AG04450 (cell line): ENCODE measurements at regions of chr22 and their contacts with region 1.

Region 1: GRCh38 chr22:31602259-31602952 is 59.6 kb downstream of the PISD start:
- DNase-seq: peak; percentile 78
- H3K4me3 ChIP-seq: no peak overlapping the region
- H3K27ac ChIP-seq: peak overlapping the region; percentile 72
- H3K27me3 ChIP-seq: no peaks in the 10 kb centered on the region
- CTCF ChIP-seq: no peak

Region 2: GRCh38 chr22:31630331-31631329 is 28.2 kb after region 1 on chr22:
- CTCF ChIA-PET with region 1: interaction called, 3 read pairs
- POLR2A ChIA-PET with region 1: interaction called, 11 read pairs
- DNase-seq: no peak
- H3K4me3 ChIP-seq: peak overlapping the region; percentile 81
- H3K27ac ChIP-seq: peak overlapping the region; percentile 81
- H3K27me3 ChIP-seq: no peaks in the 10 kb centered on the region
- CTCF ChIP-seq: no peak

Region 3: DNA sequence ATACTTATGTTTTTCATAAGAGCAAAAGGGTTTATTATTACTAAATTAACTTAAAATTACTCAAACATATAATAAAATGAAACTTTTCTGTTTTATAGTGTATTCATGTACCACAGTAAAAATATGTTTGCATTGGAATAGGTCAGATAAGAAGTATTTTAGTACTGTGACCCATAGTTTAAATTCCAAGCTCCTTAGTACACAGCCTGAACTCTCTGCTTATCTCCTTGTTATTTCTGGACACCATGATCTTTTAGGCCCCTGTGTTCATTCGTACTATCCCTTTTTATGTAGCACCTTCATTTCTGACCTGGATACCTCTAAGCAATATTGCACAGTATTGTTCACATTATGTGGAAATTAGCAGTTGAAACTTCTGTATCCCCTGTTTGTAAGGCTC is 1752.5 kb after region 1 on chr22:
- CTCF ChIA-PET with region 1: interaction called, 16 read pairs
- POLR2A ChIA-PET with region 1: no interaction called
- DNase-seq: peak; percentile 6
- H3K4me3 ChIP-seq: no peak overlapping the region
- H3K27ac ChIP-seq: no peak overlapping the region
- H3K27me3 ChIP-seq: no peaks in the 10 kb centered on the region
- CTCF ChIP-seq: no peak